ENCODE measurements at regions of chr16 and their contacts with region 1.

Region 1: GRCh38 chr16:72554935-72555334 is 383.0 kb upstream of the PMFBP1 start:
- DNase-seq: no peak
- ATAC-seq: no peak
- H3K4me3 ChIP-seq: no peak overlapping the region
- H3K4me3 Mint-ChIP-seq: no peak overlapping the region
- H3K27ac ChIP-seq: no peak overlapping the region
- H3K27ac Mint-ChIP-seq: no peak overlapping the region
- H3K4me1 ChIP-seq: no peaks in the 10 kb centered on the region
- H3K4me1 Mint-ChIP-seq: peaks cover 4% of the 10 kb centered on the region
- H3K27me3 ChIP-seq: no peaks in the 10 kb centered on the region
- H3K27me3 Mint-ChIP-seq: no peaks in the 10 kb centered on the region
- CTCF ChIP-seq: no peak

Region 2: GRCh38 chr16:72508191-72508590 is 46.7 kb before region 1 on chr16:
- CTCF ChIA-PET with region 1: no interaction called
- POLR2A ChIA-PET with region 1: no interaction called
- intact Hi-C with region 1: loop called (anchors 1 kb)
- DNase-seq: no peak
- ATAC-seq: no peak
- H3K4me3 ChIP-seq: no peak overlapping the region
- H3K4me3 Mint-ChIP-seq: no peak overlapping the region
- H3K27ac ChIP-seq: no peak overlapping the region
- H3K27ac Mint-ChIP-seq: no peak overlapping the region
- H3K4me1 ChIP-seq: no peaks in the 10 kb centered on the region
- H3K4me1 Mint-ChIP-seq: no peaks in the 10 kb centered on the region
- H3K27me3 ChIP-seq: no peaks in the 10 kb centered on the region
- H3K27me3 Mint-ChIP-seq: no peaks in the 10 kb centered on the region
- CTCF ChIP-seq: no peak